Aorta (tissue), 5 donors: ENCODE measurements at regions of chr12 and their contacts with region 1.

Region 1: DNA sequence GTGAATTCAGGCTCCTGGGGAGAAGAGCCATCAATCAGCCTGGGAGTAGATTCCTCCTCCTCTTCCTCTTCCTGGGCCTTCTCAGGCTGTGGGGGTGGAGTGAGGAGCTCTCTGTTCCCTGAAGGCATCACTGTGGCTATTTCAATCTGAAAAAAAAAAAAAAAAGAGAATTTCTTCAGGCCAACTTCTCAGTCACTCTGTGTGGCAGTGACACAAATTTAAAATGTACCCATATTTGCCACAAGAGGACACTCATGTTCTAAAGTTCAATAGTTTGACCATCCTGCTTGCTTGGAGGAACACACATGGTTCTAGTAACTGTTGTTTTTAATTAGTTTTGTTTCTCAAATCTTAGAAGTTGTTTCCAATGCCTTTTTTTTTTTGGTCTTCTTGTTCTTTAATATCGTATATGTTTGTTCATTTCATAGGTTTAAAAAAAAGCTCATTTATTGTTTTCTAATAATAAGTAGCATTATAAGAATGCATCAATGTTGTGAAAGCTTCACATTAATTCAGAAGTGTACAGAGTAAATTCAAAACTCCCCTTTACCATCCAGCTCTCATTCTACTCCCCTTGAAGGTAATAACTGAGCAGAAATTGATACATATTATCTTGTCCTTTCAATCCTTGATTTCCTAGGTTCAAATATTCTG is 23.3 kb upstream of the CCER1 start:
- DNase-seq: no peak
- ATAC-seq: peak; percentile 87
- H3K4me3 ChIP-seq: no peak overlapping the region
- H3K27ac ChIP-seq: no peak overlapping the region
- H3K4me1 ChIP-seq: no peaks in the 10 kb centered on the region
- H3K27me3 ChIP-seq: no peaks in the 10 kb centered on the region

Region 2: DNA sequence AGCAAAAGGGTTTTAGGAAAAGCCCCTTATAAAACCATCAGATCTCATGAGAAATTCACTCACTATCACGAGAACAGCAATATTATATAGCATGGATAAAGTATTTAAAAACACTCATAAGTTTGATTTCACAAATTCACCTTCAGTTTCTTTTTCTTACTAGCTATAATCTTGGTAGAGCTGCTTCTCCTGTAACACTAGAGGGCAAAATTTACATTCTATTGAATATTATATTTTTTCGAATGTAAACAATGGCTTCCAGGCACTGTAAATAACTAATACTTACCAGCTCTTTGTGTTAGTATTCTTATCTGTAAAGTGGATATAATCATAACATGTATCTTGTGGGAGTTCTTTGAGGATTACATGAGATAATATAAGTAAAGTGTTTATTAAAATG is 282.8 kb before region 1 on chr12:
- intact Hi-C with region 1: no loop called
- DNase-seq: no peak
- ATAC-seq: no peak
- H3K4me3 ChIP-seq: no peak overlapping the region
- H3K27ac ChIP-seq: no peak overlapping the region
- H3K4me1 ChIP-seq: no peaks in the 10 kb centered on the region
- H3K27me3 ChIP-seq: no peaks in the 10 kb centered on the region

Region 3: GRCh38 chr12:91023326-91024004 is 45.2 kb after region 1 on chr12:
- intact Hi-C with region 1: no loop called
- DNase-seq: no peak
- ATAC-seq: no peak
- H3K4me3 ChIP-seq: no peak overlapping the region
- H3K27ac ChIP-seq: no peak overlapping the region
- H3K4me1 ChIP-seq: no peaks in the 10 kb centered on the region
- H3K27me3 ChIP-seq: peaks cover 0 to 2% of the 10 kb centered on the region in 2 donors

Region 4: GRCh38 chr12:91077228-91077954 is 99.1 kb after region 1 on chr12:
- intact Hi-C with region 1: no loop called
- DNase-seq: no peak
- ATAC-seq: no peak
- H3K4me3 ChIP-seq: no peak overlapping the region
- H3K27ac ChIP-seq: no peak overlapping the region
- H3K4me1 ChIP-seq: no peaks in the 10 kb centered on the region
- H3K27me3 ChIP-seq: no peaks in the 10 kb centered on the region

Region 5: GRCh38 chr12:91109148-91109564 is 130.9 kb after region 1 on chr12:
- intact Hi-C with region 1: loop called in 1 of 2 experiments (anchors 5 kb)
- DNase-seq: peak; percentile 69 to 88
- ATAC-seq: peak; percentile 77
- H3K4me3 ChIP-seq: no peak overlapping the region
- H3K27ac ChIP-seq: no peak overlapping the region
- H3K4me1 ChIP-seq: peaks cover 0 to 2% of the 10 kb centered on the region in 2 donors
- H3K27me3 ChIP-seq: no peaks in the 10 kb centered on the region

Region 6: DNA sequence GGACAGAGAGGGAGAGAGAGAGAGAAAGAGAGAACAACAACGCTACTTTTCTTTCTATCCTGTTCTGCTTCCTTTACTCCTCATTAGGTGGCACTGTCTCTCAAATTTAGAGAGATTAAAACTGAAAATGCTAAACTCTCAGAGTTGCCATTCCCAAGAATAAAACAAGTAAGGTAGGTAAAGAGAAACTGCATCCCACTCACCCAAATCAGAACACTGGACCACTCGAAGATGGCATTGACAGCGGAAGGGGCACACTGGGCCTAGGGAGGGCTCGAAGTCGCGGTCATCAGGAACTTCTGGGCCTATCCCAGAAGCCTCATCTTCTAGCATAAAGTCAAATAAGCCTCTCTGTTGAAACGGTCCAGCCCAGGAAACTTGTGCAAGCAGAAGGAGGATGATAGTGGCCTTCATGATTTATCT is 199.9 kb after region 1 on chr12:
- intact Hi-C with region 1: loop called in 1 of 2 experiments (anchors 10 kb)
- DNase-seq: no peak
- ATAC-seq: peak; percentile 66
- H3K4me3 ChIP-seq: peak overlapping the region in 1 of 2 donors; percentile 64
- H3K27ac ChIP-seq: no peak overlapping the region
- H3K4me1 ChIP-seq: no peaks in the 10 kb centered on the region
- H3K27me3 ChIP-seq: no peaks in the 10 kb centered on the region

Region 7: DNA sequence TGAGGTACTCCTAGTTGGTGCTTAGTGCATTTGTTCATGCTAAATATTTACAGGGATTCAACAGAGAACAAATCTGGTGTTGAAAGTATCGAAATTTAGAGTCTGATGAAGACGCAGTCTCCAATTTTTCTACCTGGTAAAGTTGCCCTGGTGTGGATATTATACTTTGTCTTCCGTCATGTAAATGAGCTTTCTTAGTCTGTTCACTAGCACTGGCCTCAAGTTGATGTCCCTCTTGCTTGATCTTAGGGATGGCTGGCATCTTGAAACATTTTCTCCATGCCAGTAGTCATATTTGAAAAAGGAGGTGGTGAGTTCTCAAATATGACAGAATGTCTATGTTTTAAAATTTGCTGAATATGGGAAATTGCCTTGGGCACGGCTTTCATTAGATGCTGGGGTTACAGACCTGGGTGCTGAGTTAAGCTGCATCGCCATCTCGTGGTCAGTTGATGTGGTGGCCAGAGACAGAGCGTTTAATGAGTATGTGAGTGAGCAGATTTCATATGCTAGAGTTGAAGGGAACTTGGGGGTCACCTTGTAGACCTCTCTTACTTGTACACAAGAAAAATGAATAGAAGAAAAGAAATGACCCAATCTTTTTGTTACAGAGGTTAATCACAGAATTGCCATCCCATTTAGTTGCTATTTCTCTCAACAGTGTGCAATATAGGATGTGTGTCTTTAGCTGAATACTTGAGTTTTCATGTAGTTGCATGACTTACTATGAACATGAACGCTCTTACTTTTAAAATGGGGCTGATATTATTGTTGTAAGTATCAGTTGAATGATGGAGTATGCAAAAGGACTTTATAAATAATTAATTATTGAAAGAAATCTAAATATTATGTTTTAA is 377.1 kb after region 1 on chr12:
- intact Hi-C with region 1: loop called (anchors 2 to 5 kb)
- DNase-seq: peak; percentile 77 to 79
- ATAC-seq: peak; percentile 91
- H3K4me3 ChIP-seq: no peak overlapping the region
- H3K27ac ChIP-seq: no peak overlapping the region
- H3K4me1 ChIP-seq: no peaks in the 10 kb centered on the region
- H3K27me3 ChIP-seq: no peaks in the 10 kb centered on the region